ENCODE measurements at regions of chr2 and their contacts with region 1.

Region 1: DNA sequence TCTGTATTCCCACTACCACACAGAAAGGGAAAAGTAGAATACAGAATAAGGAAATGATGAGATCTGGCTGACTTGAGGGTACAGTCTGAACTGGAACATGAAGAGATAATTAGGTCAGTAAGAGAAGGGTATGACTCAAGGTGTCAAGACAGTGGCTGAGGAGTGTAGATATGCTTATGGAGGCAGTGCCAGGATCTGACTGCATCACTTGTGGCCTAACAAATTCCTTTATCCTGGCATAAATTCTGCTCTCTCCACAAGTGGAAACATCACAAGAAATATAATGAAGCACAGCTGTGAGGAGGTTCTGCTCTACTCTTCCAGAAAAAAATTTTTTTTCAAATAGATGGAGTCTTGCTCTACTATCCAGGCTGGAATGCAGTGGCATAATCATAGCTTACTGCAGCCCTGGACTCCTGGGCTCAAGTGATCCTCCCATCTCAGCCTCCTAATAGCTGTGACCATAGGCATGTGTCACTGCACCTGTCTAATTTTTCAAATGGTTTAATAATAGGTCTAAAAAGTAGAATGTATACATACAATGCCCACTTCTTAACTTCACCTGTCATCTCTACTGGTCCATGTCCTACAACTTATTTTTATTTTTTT is 85.3 kb downstream of the C2orf74 start:
- DNase-seq: no peak
- H3K4me3 ChIP-seq: no peak overlapping the region
- H3K27ac ChIP-seq: no peak overlapping the region
- H3K4me1 ChIP-seq: no peaks in the 10 kb centered on the region
- H3K27me3 ChIP-seq: no peaks in the 10 kb centered on the region
- CTCF ChIP-seq: no peak

Region 2: GRCh38 chr2:61220768-61221167 is 26.5 kb before region 1 on chr2:
- CTCF ChIA-PET with region 1: no interaction called
- POLR2A ChIA-PET with region 1: interaction called, 21 read pairs
- intact Hi-C with region 1: no loop called
- DNase-seq: no peak
- H3K4me3 ChIP-seq: no peak overlapping the region
- H3K27ac ChIP-seq: peak overlapping the region; percentile 39; the same call in 1 of the 2 replicates
- H3K4me1 ChIP-seq: peaks cover 28% of the 10 kb centered on the region
- H3K27me3 ChIP-seq: no peaks in the 10 kb centered on the region
- CTCF ChIP-seq: no peak

Region 3: DNA sequence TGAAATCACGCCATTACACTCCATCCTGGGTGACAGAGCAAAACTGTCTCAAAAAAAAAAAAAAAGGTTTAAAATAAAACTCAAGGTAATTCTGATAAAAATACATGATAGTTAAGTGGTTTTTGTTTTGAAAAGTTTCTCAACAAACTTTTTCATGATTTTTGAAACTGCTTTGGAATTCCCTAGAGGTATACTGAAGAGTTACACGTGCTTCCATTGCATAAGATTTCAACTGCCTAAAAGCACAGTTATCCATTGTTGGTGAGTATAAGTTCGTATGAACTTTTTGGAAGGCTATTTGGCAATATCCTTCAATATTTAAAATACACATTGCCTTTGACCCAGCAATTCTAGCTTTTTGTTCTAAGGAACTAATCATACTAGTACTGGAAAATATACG is 148.7 kb after region 1 on chr2:
- CTCF ChIA-PET with region 1: no interaction called
- POLR2A ChIA-PET with region 1: no interaction called
- intact Hi-C with region 1: no loop called
- DNase-seq: no peak
- H3K4me3 ChIP-seq: no peak overlapping the region
- H3K27ac ChIP-seq: no peak overlapping the region
- H3K4me1 ChIP-seq: no peaks in the 10 kb centered on the region
- H3K27me3 ChIP-seq: no peaks in the 10 kb centered on the region
- CTCF ChIP-seq: no peak